ENCODE measurements at regions of chr13 and their contacts with region 1.

Region 1: GRCh38 chr13:21476893-21477472 is 17.9 kb upstream of the ZDHHC20 start:
- DNase-seq: peak; percentile 82
- CTCF ChIP-seq: peak; percentile 95

Region 2: GRCh38 chr13:20843166-20843565 is 633.8 kb before region 1 on chr13:
- CTCF ChIA-PET with region 1: no interaction called
- POLR2A ChIA-PET with region 1: no interaction called
- DNase-seq: no peak
- CTCF ChIP-seq: no peak

Region 3: DNA sequence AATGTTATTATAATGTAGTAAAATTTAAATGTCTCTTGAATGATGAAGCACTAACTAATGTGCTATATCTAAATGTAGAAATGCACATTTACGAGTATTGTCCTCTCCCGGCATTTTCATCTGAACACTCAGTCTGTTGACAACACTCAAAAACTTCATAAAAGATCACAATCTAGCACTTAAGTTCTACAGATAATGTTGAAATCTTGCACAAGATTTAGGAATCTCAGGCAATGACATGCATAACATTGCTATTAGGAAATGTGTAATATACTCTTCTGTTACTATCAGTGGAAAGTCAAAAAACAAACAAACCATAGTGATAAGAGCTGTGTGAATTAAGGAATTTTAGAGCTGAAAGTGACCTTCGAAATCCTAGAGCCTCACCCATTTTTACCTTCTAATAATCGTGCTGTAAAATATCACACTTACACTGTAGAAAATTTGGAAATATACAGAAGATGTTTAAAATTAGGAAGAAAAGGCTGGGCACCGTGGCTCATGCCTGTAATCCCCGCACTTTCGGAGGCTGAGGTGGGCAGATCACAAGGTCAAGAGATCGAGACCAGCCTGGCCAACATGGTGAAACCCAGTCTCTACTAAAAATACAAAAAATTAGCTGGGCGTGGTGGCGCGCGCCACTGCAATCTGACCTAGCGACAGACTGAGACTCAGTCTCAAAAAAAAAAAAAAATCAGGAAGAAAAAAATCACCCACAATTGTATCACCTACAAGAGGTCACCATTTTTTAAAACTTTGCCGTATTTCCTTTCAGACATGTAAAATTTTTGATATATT is 536.7 kb before region 1 on chr13:
- CTCF ChIA-PET with region 1: interaction called, 20 read pairs
- POLR2A ChIA-PET with region 1: no interaction called
- DNase-seq: no peak
- CTCF ChIP-seq: no peak

Region 4: GRCh38 chr13:21109168-21109567 is 367.8 kb before region 1 on chr13:
- CTCF ChIA-PET with region 1: interaction called, 11 read pairs
- POLR2A ChIA-PET with region 1: no interaction called
- DNase-seq: no peak
- CTCF ChIP-seq: no peak

Region 5: GRCh38 chr13:21176220-21176982 is 300.6 kb before region 1 on chr13 and contains the starts of genes MRPL57 and SKA3:
- CTCF ChIA-PET with region 1: interaction called, 13 read pairs
- POLR2A ChIA-PET with region 1: no interaction called
- DNase-seq: peak; percentile 98
- CTCF ChIP-seq: no peak

Region 6: DNA sequence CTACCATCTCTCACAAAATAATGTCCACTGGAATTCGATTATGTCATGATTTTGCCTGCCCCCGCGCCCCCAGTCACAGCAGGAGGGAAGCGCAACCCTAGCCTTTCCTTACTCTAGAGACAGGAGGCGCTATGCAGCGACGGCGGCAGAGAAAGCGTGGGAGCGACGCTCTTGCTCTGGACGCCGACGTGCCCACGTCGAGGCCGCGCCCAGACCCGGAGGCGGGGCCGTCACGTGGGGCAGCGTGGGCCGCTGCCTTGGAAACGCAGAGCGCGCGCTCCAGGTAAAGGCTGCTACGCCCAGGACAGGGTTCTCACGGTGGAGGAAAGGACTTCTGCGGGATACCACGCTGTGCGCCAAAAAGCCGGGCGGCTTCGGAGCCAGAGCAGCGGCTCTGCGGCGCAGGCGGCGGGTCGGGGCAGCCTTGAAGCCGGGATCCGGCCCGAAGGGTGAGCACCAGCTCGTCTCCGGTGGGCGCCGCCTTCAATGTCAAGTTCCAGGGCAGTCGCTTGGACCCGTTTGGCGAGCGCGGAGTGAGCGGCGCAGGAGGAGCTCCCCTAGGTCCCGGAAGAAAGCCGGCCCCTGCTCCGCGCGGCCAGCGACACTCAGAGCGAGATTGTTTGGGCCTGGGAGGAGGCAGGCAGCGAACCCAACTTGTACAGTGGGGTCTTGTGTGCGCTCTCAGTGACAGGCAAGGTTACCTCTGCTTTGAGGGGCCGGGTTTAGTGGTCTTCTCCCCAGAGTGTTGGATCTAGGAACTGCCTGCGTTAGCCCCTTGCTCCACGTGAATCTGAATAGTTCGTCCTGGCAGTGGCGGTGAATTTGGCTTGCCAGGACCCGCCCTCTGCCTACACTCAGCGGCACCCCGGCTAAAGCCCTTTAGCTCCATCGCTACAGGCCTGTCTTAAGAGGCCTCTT is 178.8 kb before region 1 on chr13:
- CTCF ChIA-PET with region 1: interaction called, 147 read pairs
- POLR2A ChIA-PET with region 1: no interaction called
- DNase-seq: peak; percentile 95
- CTCF ChIP-seq: peak; percentile 94

Region 7: DNA sequence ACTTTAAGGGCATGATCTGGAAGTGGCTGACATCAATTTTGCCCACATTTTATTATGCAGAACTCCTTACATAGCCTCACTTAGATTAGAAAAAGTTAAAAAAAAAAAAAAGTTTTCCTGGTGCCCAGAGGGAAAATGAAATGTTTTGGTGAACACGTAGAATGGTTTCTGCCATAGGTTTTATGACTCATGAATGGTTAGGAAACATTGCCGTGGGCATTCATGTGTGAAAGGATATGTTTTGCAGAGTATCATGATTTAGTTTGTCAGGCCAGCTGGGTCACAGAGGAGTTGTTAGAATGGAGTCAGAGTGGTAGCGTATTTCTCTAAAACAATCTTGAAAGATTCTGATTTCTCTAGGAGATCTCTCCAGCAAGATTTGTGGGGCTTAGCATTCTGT is 166.8 kb before region 1 on chr13:
- CTCF ChIA-PET with region 1: interaction called, 10 read pairs
- POLR2A ChIA-PET with region 1: no interaction called
- DNase-seq: no peak
- CTCF ChIP-seq: no peak

Region 8: GRCh38 chr13:21344662-21345176 is 132.3 kb before region 1 on chr13:
- CTCF ChIA-PET with region 1: no interaction called
- POLR2A ChIA-PET with region 1: no interaction called
- DNase-seq: no peak
- CTCF ChIP-seq: no peak

Region 9: GRCh38 chr13:21465710-21466160 is 11.2 kb before region 1 on chr13:
- CTCF ChIA-PET with region 1: interaction called, 34 read pairs
- POLR2A ChIA-PET with region 1: no interaction called
- DNase-seq: no peak
- CTCF ChIP-seq: no peak